CD4-positive, alpha-beta memory T cell (primary cell): ENCODE measurements at regions of chr17 and their contacts with region 1.

Region 1: GRCh38 chr17:42980398-42981397 is at the start of gene RUNDC1:
- DNase-seq: peak; percentile 86 to 92 (median 88)
- H3K4me3 ChIP-seq: peak within 1 kb of the TSS; percentile 69 to 75
- H3K4me3 Mint-ChIP-seq: peak within 1 kb of the TSS; percentile 94 to 100 (median 97)
- H3K27ac ChIP-seq: peak within 1 kb of the TSS; percentile 77
- H3K27ac Mint-ChIP-seq: peak within 1 kb of the TSS; percentile 89 to 99 (median 98)
- H3K4me1 ChIP-seq: peaks cover 23% of the 10 kb centered on the region
- H3K4me1 Mint-ChIP-seq: peaks cover 21 to 39% (median 30%) of the 10 kb centered on the region in 4 donors
- H3K27me3 ChIP-seq: no peaks in the 10 kb centered on the region
- H3K27me3 Mint-ChIP-seq: no peaks in the 10 kb centered on the region
- total RNA-seq, gene RUNDC1: 24.1 to 25.5 TPM

Region 2: DNA sequence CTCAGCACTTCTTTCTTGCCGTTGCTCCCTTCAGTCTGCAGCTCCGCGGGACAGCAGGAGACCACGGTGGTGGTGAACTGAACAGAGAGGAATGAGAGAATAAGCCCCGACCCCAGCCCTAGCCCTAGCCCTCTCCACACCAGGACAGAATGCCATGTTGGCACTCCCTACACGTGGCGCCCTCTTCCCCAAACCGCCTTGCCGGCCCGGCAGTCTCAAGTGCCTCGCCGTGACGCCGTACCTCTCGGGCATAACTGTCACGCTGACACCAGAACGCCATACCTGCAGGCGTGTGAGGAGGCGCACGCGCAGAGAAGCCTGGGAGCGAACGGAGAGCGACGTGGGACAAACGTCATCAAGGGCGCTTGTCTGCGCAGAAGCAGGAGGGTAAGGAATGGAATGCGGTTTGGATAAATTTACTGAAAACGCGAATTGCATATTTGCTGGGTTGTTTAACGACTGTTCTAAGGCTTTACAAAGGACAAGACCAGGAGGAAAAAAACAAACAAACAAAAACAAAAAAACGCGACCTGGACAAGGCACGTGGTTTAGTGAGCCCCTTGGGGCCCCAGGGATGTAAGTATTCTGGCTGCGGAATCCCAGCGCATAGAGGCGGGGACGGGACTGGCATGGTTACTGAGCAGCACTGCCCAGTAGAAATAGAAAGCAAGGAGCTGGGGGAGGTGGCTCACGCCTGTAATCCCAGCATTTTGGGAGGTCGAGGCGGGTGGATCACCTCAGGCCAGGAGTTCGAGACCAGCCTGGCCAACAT is 16.4 kb before region 1 on chr17 and contains the start of gene AARSD1:
- CTCF ChIA-PET with region 1: interaction called, 3 read pairs
- POLR2A ChIA-PET with region 1: interaction called, 3 read pairs
- intact Hi-C with region 1: loop called (anchors 2 kb)
- DNase-seq: peak; percentile 89 to 93 (median 89)
- H3K4me3 ChIP-seq: peak within 1 kb of the TSS; percentile 56 to 59
- H3K4me3 Mint-ChIP-seq: peak within 1 kb of the TSS; percentile 91 to 99 (median 97)
- H3K27ac ChIP-seq: peak within 1 kb of the TSS; percentile 71
- H3K27ac Mint-ChIP-seq: peak within 1 kb of the TSS; percentile 79 to 99 (median 98)
- H3K4me1 ChIP-seq: peaks cover 11% of the 10 kb centered on the region
- H3K4me1 Mint-ChIP-seq: peaks cover 10 to 22% (median 15%) of the 10 kb centered on the region in 4 donors
- H3K27me3 ChIP-seq: no peaks in the 10 kb centered on the region
- H3K27me3 Mint-ChIP-seq: no peaks in the 10 kb centered on the region
- total RNA-seq, gene AARSD1: 53.0 to 55.6 TPM

Region 3: GRCh38 chr17:43125133-43125966 is 144.7 kb after region 1 on chr17 and contains the start of gene BRCA1:
- CTCF ChIA-PET with region 1: no interaction called
- POLR2A ChIA-PET with region 1: no interaction called
- intact Hi-C with region 1: loop called (anchors 1 kb)
- DNase-seq: peak; percentile 95 to 98 (median 97)
- H3K4me3 ChIP-seq: peak within 1 kb of the TSS; percentile 80 to 89
- H3K4me3 Mint-ChIP-seq: peak within 1 kb of the TSS; percentile 87 to 98 (median 96)
- H3K27ac ChIP-seq: peak within 1 kb of the TSS; percentile 72
- H3K27ac Mint-ChIP-seq: peak within 1 kb of the TSS; percentile 82 to 98 (median 96)
- H3K4me1 ChIP-seq: peaks cover 17% of the 10 kb centered on the region
- H3K4me1 Mint-ChIP-seq: peaks cover 19 to 35% (median 27%) of the 10 kb centered on the region in 4 donors
- H3K27me3 ChIP-seq: no peaks in the 10 kb centered on the region
- H3K27me3 Mint-ChIP-seq: no peaks in the 10 kb centered on the region
- total RNA-seq, gene BRCA1: 4.8 to 6.0 TPM